Natural killer cell (primary cell): ENCODE measurements at regions of chr11 and their contacts with region 1.

Region 1: GRCh38 chr11:61477727-61478148 is 30.8 kb upstream of the LRRC10B start:
- DNase-seq: peak; percentile 52 to 72
- ATAC-seq: peak; percentile 41 to 73 (median 72)
- H3K4me3 ChIP-seq: no peak overlapping the region
- H3K4me3 Mint-ChIP-seq: no peak overlapping the region
- H3K27ac ChIP-seq: no peak overlapping the region
- H3K27ac Mint-ChIP-seq: no peak overlapping the region
- H3K4me1 ChIP-seq: peaks cover 8% of the 10 kb centered on the region
- H3K4me1 Mint-ChIP-seq: peaks cover 0 to 6% of the 10 kb centered on the region in 2 donors
- H3K27me3 ChIP-seq: no peaks in the 10 kb centered on the region
- H3K27me3 Mint-ChIP-seq: peaks cover 0 to 3% of the 10 kb centered on the region in 2 donors
- CTCF ChIP-seq: peak; percentile 94

Region 2: GRCh38 chr11:61384271-61385242 is 93.2 kb before region 1 on chr11:
- intact Hi-C with region 1: no loop called
- DNase-seq: no peak
- ATAC-seq: no peak
- H3K4me3 ChIP-seq: no peak overlapping the region
- H3K4me3 Mint-ChIP-seq: no peak overlapping the region
- H3K27ac ChIP-seq: no peak overlapping the region
- H3K27ac Mint-ChIP-seq: no peak overlapping the region
- H3K4me1 ChIP-seq: peaks cover 5% of the 10 kb centered on the region
- H3K4me1 Mint-ChIP-seq: peaks cover 7 to 8% of the 10 kb centered on the region in 2 donors
- H3K27me3 ChIP-seq: no peaks in the 10 kb centered on the region
- H3K27me3 Mint-ChIP-seq: no peaks in the 10 kb centered on the region
- CTCF ChIP-seq: no peak

Region 3: GRCh38 chr11:61581030-61581928 is 103.5 kb after region 1 on chr11 and contains the start of gene SYT7:
- intact Hi-C with region 1: no loop called
- DNase-seq: peak; percentile 95 to 97
- ATAC-seq: peak; percentile 86 to 91 (median 87)
- H3K4me3 ChIP-seq: no peak within 1 kb of the TSS
- H3K4me3 Mint-ChIP-seq: peak within 1 kb of the TSS; percentile 87
- H3K27ac ChIP-seq: no peak within 1 kb of the TSS
- H3K27ac Mint-ChIP-seq: peak within 1 kb of the TSS; percentile 46 to 74
- H3K4me1 ChIP-seq: peaks cover 14% of the 10 kb centered on the region
- H3K4me1 Mint-ChIP-seq: peaks cover 0 to 19% of the 10 kb centered on the region in 2 donors
- H3K27me3 ChIP-seq: peaks cover 17% of the 10 kb centered on the region
- H3K27me3 Mint-ChIP-seq: peaks cover 24 to 36% of the 10 kb centered on the region in 2 donors
- CTCF ChIP-seq: peak; percentile 9
- total RNA-seq, gene SYT7: 0.07 TPM in 1 of 3 donors, not detected in the others

Region 4: GRCh38 chr11:61639816-61640443 is 162.2 kb after region 1 on chr11:
- intact Hi-C with region 1: loop called (anchors 2 kb)
- DNase-seq: no peak
- ATAC-seq: no peak
- H3K4me3 ChIP-seq: no peak overlapping the region
- H3K4me3 Mint-ChIP-seq: no peak overlapping the region
- H3K27ac ChIP-seq: no peak overlapping the region
- H3K27ac Mint-ChIP-seq: no peak overlapping the region
- H3K4me1 ChIP-seq: no peaks in the 10 kb centered on the region
- H3K4me1 Mint-ChIP-seq: no peaks in the 10 kb centered on the region
- H3K27me3 ChIP-seq: no peaks in the 10 kb centered on the region
- H3K27me3 Mint-ChIP-seq: peaks cover 0 to 2% of the 10 kb centered on the region in 2 donors
- CTCF ChIP-seq: no peak